HCT116 (cell line): ENCODE measurements at regions of chr3 and their contacts with region 1.

Region 1: DNA sequence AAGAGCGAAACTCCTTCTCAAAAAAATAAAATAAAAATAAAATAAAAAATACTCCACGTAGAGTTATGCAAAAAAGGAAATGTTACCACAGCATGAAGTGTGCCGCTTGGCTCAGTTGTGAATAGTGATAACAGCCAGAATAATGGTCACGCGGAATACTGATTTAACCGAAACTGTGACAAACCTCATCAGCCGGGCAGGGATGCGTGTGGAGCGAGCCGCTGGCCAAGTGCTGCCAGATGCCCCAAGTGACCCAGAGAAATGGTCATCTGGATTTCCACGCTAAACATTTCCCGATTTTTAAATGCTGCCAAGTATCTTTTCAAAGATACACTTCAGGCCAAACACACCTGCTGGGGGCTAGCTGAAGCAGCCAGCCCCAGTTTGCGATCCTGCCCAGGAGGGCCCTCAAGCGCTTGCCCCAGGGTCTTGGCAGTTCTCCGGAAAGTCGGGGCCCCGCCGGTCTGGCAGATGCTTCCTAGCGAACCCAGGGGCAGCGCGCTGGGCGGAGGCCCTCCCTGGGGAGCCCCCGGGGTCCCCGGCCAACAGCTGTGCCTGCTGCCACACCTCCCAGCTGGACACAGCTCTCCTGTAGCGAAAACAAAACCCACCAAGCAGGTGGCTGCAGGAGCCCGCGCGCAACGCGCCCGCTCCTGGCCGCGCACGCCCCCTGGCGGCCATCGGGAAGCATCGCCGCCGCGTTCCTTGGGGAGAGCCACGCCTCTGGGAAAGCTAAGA is 35.1 kb downstream of the CMTM6 start:
- DNase-seq: no peak
- ATAC-seq: peak; percentile 66
- H3K4me3 ChIP-seq: no peak overlapping the region
- H3K27ac ChIP-seq: peak overlapping the region; percentile 24; the same call in 1 of the 2 replicates
- H3K4me1 ChIP-seq: peaks cover 39 to 53% of the 10 kb centered on the region in 2 experiments
- H3K27me3 ChIP-seq: no peaks in the 10 kb centered on the region
- CTCF ChIP-seq: peak; percentile 86 to 98 (median 91)
- POLR2A ChIP-seq: no peak
- RAD21 ChIP-seq: peak; percentile 96

Region 2: GRCh38 chr3:32296256-32297204 is 171.0 kb before region 1 on chr3:
- CTCF ChIA-PET with region 1: no interaction called
- POLR2A ChIA-PET with region 1: no interaction called
- RAD21 ChIA-PET with region 1: no interaction called
- intact Hi-C with region 1: loop called (anchors 10 kb)
- DNase-seq: peak; percentile 52
- ATAC-seq: peak; percentile 92
- H3K4me3 ChIP-seq: no peak overlapping the region
- H3K27ac ChIP-seq: no peak overlapping the region
- H3K4me1 ChIP-seq: peaks cover 15 to 28% of the 10 kb centered on the region in 2 experiments
- H3K27me3 ChIP-seq: no peaks in the 10 kb centered on the region
- CTCF ChIP-seq: peak; percentile 76 to 94 (median 83)
- POLR2A ChIP-seq: no peak
- RAD21 ChIP-seq: peak; percentile 84

Region 3: DNA sequence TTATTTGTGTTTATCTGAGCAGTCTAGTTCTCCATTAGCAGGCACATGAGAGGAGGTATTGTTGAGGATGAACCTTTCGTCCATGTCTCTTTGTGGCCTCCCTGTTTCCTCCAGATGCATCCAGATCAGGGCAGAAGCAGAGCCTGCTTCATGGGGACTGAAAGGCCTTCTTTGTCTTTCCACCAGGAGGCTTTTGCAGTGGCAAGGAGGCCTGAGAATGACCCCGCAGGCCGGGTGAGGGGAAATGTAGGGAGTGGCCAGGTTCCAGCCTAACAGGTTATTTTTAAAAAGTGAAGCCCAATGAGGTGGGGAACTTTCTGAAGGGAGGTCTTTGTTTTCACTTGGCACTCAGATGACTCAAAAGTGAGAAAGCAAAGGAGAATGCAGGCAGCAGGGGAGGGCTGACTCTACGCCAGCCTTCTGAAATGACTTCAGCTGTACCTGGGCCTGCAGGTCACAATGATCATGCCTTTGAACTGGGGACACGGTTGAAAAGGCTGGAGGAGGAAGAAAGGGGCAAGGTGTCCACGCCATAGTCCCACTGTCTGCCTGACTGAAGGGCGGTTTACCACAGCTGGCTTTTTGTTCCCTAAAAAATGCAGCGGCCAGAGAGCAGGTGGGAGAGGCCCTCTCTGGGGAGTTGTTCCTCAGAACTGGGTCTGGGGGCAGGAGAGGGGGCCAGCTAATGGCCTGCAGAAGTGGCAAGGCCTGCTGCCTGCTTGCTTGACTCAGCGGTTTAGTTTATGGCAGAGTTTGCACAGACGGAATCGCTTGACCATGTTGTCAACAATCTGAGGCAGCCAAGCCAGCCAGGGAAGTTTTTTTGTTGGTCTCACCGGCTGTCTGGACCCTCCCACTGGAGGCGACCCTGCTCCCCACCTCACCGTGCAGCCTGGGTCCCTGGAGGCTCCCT is 47.1 kb before region 1 on chr3:
- CTCF ChIA-PET with region 1: interaction called, 8 read pairs
- POLR2A ChIA-PET with region 1: interaction called, 6 read pairs
- RAD21 ChIA-PET with region 1: interaction called, 3 to 4 read pairs
- intact Hi-C with region 1: loop called (anchors 2 kb)
- DNase-seq: peak; percentile 97
- ATAC-seq: peak; percentile 82
- H3K4me3 ChIP-seq: peak overlapping the region; percentile 37 to 51
- H3K27ac ChIP-seq: peak overlapping the region; percentile 97
- H3K4me1 ChIP-seq: peaks cover 73 to 96% of the 10 kb centered on the region in 2 experiments
- H3K27me3 ChIP-seq: no peaks in the 10 kb centered on the region
- CTCF ChIP-seq: peak in 2 of 3 experiments; percentile 42 to 52; a peak in 4 of 6 replicates
- POLR2A ChIP-seq: no peak
- RAD21 ChIP-seq: no peak

Region 4: GRCh38 chr3:32712611-32713010 is 245.1 kb after region 1 on chr3:
- CTCF ChIA-PET with region 1: no interaction called
- POLR2A ChIA-PET with region 1: no interaction called
- RAD21 ChIA-PET with region 1: no interaction called
- intact Hi-C with region 1: no loop called
- DNase-seq: no peak
- ATAC-seq: no peak
- H3K4me3 ChIP-seq: no peak overlapping the region
- H3K27ac ChIP-seq: no peak overlapping the region
- H3K4me1 ChIP-seq: no peaks in the 10 kb centered on the region
- H3K27me3 ChIP-seq: no peaks in the 10 kb centered on the region
- CTCF ChIP-seq: no peak
- POLR2A ChIP-seq: no peak
- RAD21 ChIP-seq: no peak